ENCODE measurements at regions of chr19 and their contacts with region 1.

Region 1: GRCh38 chr19:31181535-31181934 is 167.7 kb downstream of the TSHZ3 start:
- DNase-seq: no peak
- ATAC-seq: no peak
- H3K4me3 ChIP-seq: no peak overlapping the region
- H3K27ac ChIP-seq: no peak overlapping the region
- H3K4me1 ChIP-seq: no peaks in the 10 kb centered on the region
- H3K27me3 ChIP-seq: peaks cover 0 to 5% (median 0%) of the 10 kb centered on the region in 7 donors
- CTCF ChIP-seq: no peak

Region 2: GRCh38 chr19:31220541-31220940 is 39.0 kb after region 1 on chr19:
- intact Hi-C with region 1: no loop called
- DNase-seq: no peak
- ATAC-seq: peak in 1 of 8 donors; percentile 46
- H3K4me3 ChIP-seq: no peak overlapping the region
- H3K27ac ChIP-seq: no peak overlapping the region
- H3K4me1 ChIP-seq: peaks cover 0 to 8% (median 0%) of the 10 kb centered on the region in 9 donors
- H3K27me3 ChIP-seq: no peaks in the 10 kb centered on the region
- CTCF ChIP-seq: no peak

Region 3: DNA sequence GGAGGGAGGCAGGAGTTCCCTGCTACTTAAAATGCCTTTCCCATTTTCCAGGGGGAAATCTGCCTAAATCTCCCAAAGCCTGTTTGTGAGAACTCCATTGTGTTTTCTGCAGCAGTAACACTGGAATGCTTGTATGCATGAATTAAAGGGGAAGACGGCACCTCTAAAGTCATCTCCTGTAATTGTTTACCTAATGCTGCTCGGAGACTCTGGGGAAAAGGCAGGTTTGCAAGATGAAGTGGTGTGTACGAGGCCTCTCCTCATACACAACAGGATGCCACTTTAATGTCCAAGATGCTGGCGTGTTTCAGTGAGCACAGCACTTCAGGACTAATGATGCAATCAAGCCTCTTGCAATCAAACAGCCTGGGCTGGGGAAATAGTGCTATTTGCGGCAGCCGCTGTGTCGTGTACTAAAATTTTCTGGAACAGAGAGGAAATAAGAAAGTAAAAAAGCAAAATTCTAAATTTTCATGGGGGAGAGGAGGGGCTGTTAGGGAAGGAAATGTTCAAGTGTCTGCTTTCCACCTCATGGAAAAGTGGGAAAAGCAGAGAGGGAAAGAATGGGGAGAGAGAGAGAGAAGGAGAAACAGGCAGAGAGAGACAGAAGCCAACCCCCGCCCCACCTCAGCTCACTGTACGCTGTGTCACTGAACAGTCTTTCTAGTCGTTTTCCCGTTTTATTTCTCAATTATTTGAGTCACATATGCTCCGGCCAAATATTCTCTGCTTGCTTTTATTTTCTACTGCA is 134.8 kb after region 1 on chr19:
- intact Hi-C with region 1: loop called in 1 of 10 experiments (anchors 5 kb)
- DNase-seq: peak in 1 of 2 donors; percentile 18
- ATAC-seq: peak; percentile 54 to 81 (median 72)
- H3K4me3 ChIP-seq: peak overlapping the region in 5 of 10 donors; percentile 4 to 34 (median 10)
- H3K27ac ChIP-seq: peak overlapping the region in 8 of 10 donors; percentile 9 to 83 (median 40)
- H3K4me1 ChIP-seq: peaks cover 12 to 65% (median 45%) of the 10 kb centered on the region in 9 donors
- H3K27me3 ChIP-seq: peaks cover 0 to 11% (median 0%) of the 10 kb centered on the region in 7 donors
- CTCF ChIP-seq: no peak

Measured in heart right ventricle (tissue), 16 donors.